ENCODE measurements at regions of chr1 and their contacts with region 1.

Region 1: DNA sequence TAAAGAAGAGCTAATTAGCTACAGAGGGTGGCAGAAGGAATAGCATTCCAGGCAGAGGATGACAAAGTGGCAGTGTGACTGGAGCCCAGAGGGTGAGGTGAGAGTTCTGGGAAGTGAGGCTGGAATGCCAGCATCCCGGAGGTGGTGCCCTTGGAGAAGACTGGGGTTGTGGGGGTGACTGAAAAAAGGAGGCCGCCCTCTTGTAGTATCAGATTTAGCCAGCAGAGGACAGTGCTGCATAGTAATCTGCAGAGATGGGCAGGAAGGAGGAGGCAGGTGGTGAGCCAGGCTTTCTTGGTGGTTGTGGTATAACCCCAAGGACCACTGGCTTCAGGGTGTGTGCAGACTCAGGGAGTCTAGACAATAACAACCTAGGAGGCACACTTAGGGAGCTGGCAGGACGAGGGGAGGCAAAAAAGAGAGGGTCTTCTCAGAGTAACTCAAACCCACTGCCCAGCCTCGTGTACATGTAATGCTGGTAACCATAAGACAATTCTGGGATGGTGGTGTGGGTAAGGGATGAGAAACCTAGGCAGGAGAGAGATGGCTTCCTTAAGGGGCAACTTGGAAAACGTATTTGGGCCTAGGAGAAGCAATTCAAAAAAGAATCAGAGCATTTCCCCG is 30.5 kb downstream of the MROH7 start:
- DNase-seq: peak; percentile 17
- ATAC-seq: peak; percentile 96
- H3K4me3 ChIP-seq: no peak overlapping the region
- H3K27ac ChIP-seq: no peak overlapping the region
- H3K4me1 ChIP-seq: no peaks in the 10 kb centered on the region
- H3K27me3 ChIP-seq: peaks cover 0 to 2% of the 10 kb centered on the region in 2 experiments; a peak in 2 of 4 replicates
- CTCF ChIP-seq: peak; percentile 88 to 98 (median 88)
- EP300 ChIP-seq: no peak
- POLR2A ChIP-seq: no peak
- RAD21 ChIP-seq: peak; percentile 95

Region 2: DNA sequence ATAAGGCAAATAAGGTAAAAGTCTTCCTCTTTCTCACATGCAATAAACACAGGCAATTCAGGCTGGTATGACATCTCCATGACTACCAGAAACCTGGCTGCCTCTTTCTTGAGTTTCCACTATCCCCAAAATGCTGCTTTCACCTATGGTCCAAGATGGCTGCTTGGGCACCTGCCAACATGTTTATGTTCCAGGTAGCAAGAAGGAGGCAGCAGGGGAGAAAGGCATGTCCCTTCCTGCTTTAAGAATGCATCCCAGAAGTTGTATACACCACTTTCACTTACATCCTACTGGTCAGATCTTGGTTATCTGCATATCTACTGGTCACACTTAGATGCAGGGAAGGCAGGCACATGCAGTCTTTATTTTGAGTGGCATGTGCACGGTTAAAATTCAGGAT is 143.5 kb before region 1 on chr1:
- CTCF ChIA-PET with region 1: no interaction called
- POLR2A ChIA-PET with region 1: no interaction called
- RAD21 ChIA-PET with region 1: no interaction called
- SMC1A ChIA-PET with region 1: no interaction called
- in situ Hi-C with region 1: no loop called
- intact Hi-C with region 1: no loop called
- DNase-seq: no peak
- ATAC-seq: no peak
- H3K4me3 ChIP-seq: no peak overlapping the region
- H3K27ac ChIP-seq: no peak overlapping the region
- H3K4me1 ChIP-seq: no peaks in the 10 kb centered on the region
- H3K27me3 ChIP-seq: 0 out of 4 replicates have a peak, but pooled peaks cover 0 to 2% of the 10 kb centered on the region in 2 experiments
- CTCF ChIP-seq: no peak
- EP300 ChIP-seq: no peak
- POLR2A ChIP-seq: no peak
- RAD21 ChIP-seq: no peak

Region 3: GRCh38 chr1:55021965-55022546 is 350.0 kb after region 1 on chr1:
- CTCF ChIA-PET with region 1: no interaction called
- POLR2A ChIA-PET with region 1: no interaction called
- RAD21 ChIA-PET with region 1: no interaction called
- SMC1A ChIA-PET with region 1: no interaction called
- in situ Hi-C with region 1: no loop called
- intact Hi-C with region 1: loop called (anchors 2 kb)
- DNase-seq: peak; percentile 1
- ATAC-seq: peak; percentile 100
- H3K4me3 ChIP-seq: no peak overlapping the region
- H3K27ac ChIP-seq: no peak overlapping the region
- H3K4me1 ChIP-seq: no peaks in the 10 kb centered on the region
- H3K27me3 ChIP-seq: no peaks in the 10 kb centered on the region
- CTCF ChIP-seq: peak; percentile 90 to 94 (median 91)
- EP300 ChIP-seq: no peak
- POLR2A ChIP-seq: no peak
- RAD21 ChIP-seq: peak; percentile 67